ENCODE measurements at regions of chr3 and their contacts with region 1.

Region 1: DNA sequence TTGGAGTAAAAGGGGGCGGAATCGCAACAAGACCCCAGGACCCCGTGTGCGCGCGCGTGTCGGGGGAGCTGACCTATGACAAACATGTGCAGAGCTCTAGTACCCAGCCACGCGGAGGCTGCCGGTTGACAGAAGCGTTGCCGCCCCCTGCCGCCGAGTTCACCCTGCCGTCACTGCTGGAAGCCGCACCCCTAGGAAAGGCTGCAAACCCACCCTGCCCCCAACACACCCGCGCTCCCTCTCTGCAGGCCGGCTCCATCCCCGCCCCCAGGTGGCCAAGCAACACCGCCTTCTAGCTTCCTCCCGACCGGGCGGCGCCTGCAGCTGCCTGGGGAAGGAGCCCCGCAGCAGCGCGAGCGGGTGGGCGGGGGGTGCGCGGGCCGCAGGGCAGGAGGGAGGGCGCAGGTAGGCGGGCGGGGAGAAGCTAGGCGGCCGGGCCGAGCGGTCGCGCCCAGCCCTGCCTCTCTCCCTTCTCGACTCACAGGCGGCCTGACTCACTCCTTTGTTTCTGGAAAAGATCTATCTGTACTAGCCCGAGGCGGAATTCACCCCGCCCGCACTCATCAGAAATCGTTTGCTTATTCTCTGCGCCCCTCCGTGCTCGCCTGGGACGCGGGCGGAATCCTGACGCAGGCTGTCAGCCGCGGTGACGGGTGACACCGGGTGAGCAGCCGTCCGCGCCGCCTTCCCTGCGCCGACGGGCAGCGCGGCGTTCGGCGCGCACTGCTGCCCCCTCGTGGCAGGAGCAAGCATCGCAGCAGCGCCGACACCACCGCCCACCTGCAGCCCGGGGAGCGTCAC is 160.8 kb downstream of the GAP43 start:
- DNase-seq: peak; percentile 82 to 96 (median 90)
- ATAC-seq: peak; percentile 83
- H3K4me3 ChIP-seq: peak overlapping the region; percentile 72
- H3K4me3 Mint-ChIP-seq: peak overlapping the region; percentile 80
- H3K27ac ChIP-seq: peak overlapping the region; percentile 94
- H3K27ac Mint-ChIP-seq: peak overlapping the region; percentile 79
- H3K4me1 ChIP-seq: peaks cover 16% of the 10 kb centered on the region
- H3K4me1 Mint-ChIP-seq: peaks cover 10% of the 10 kb centered on the region
- H3K27me3 ChIP-seq: no peaks in the 10 kb centered on the region
- H3K27me3 Mint-ChIP-seq: no peaks in the 10 kb centered on the region
- CTCF ChIP-seq: peak; percentile 99

Region 2: DNA sequence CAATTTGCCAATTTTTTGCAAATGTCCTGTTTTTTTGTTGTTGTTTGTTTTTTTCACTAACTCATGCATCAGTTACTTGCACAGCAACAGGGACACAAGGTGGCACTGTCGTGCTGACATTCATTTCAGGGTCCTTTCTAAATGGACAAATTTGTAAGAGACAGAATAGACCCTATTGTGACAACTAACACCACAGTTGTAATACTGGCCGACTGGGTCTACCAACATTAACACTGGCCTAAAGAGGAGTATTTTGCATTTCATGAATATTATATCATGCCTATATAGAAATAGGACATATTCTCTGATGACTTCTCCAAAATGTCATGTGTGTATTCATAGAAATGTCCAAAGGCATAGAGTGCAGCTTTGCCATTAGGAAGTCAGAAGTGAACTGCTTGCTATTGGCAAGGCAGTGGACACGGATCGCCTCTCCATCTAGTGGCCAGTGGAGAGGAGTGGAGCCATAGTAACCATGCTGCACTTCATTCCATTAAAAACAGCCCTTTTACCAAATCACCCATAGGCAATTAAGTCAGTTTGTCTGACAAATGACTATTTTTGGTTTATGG is 691.8 kb before region 1 on chr3:
- CTCF ChIA-PET with region 1: interaction called, 9 read pairs
- POLR2A ChIA-PET with region 1: interaction called, 6 read pairs
- intact Hi-C with region 1: loop called in 1 of 2 experiments (anchors 2 kb)
- DNase-seq: peak; percentile 14 to 79 (median 56)
- ATAC-seq: peak; percentile 67
- H3K4me3 ChIP-seq: no peak overlapping the region
- H3K4me3 Mint-ChIP-seq: no peak overlapping the region
- H3K27ac ChIP-seq: no peak overlapping the region
- H3K27ac Mint-ChIP-seq: no peak overlapping the region
- H3K4me1 ChIP-seq: no peaks in the 10 kb centered on the region
- H3K4me1 Mint-ChIP-seq: peaks cover 68% of the 10 kb centered on the region
- H3K27me3 ChIP-seq: no peaks in the 10 kb centered on the region
- H3K27me3 Mint-ChIP-seq: no peaks in the 10 kb centered on the region
- CTCF ChIP-seq: peak; percentile 81

Region 3: DNA sequence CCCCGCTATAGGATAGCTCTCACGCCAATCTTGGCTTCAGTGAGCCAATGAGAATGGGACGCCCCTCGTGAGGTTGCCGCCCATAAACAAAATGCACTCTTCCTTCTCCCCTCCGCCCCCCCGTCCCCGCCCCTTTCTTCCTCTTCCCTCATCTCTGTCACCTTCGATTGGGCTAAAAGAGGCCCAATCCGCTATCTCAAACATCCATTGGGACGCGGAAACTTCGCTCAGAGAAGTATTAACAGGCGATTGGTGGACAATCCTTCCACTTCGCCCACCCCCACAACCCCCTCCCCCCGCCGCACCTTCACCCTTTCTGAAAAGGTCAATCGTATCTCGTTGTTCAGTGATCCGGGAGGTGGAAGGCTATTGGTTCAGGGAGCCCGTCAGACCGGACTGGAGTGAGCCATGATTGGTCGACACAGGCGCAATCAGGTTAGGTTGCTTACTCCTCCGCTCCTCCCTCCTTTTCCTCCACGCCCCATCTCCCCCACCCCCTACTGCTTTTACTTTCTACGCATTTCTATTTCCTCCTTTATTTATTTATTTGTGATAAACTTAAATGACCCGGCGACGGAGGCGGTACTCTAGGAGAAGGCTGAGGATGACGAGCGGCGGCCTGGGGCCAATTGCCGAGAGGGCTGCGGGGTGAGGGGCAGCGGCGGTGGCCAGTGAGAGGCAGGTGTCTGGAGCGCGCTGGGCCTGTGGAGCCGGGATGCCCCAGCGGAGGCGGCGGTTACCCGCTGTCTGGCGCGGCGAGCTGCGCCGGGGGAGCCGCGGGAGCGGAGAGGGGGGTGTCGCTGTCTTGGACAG is 636.6 kb before region 1 on chr3:
- CTCF ChIA-PET with region 1: interaction called, 6 read pairs
- POLR2A ChIA-PET with region 1: interaction called, 18 read pairs
- intact Hi-C with region 1: loop called (anchors 1 to 5 kb)
- DNase-seq: peak; percentile 89 to 99 (median 96)
- ATAC-seq: peak; percentile 72
- H3K4me3 ChIP-seq: peak overlapping the region; percentile 90
- H3K4me3 Mint-ChIP-seq: peak overlapping the region; percentile 94
- H3K27ac ChIP-seq: peak overlapping the region; percentile 91 to 97
- H3K27ac Mint-ChIP-seq: peak overlapping the region; percentile 94
- H3K4me1 ChIP-seq: peaks cover 14% of the 10 kb centered on the region
- H3K4me1 Mint-ChIP-seq: peaks cover 31% of the 10 kb centered on the region
- H3K27me3 ChIP-seq: no peaks in the 10 kb centered on the region
- H3K27me3 Mint-ChIP-seq: no peaks in the 10 kb centered on the region
- CTCF ChIP-seq: no peak

Region 4: GRCh38 chr3:115658337-115659181 is 125.6 kb before region 1 on chr3:
- CTCF ChIA-PET with region 1: interaction called, 6 read pairs
- POLR2A ChIA-PET with region 1: interaction called, 9 read pairs
- intact Hi-C with region 1: loop called (anchors 2 to 5 kb)
- DNase-seq: peak; percentile 51 to 83 (median 64)
- ATAC-seq: peak; percentile 90
- H3K4me3 ChIP-seq: peak overlapping the region; percentile 83
- H3K4me3 Mint-ChIP-seq: peak overlapping the region; percentile 93
- H3K27ac ChIP-seq: peak overlapping the region; percentile 18 to 85
- H3K27ac Mint-ChIP-seq: peak overlapping the region; percentile 96
- H3K4me1 ChIP-seq: peaks cover 17% of the 10 kb centered on the region
- H3K4me1 Mint-ChIP-seq: peaks cover 30% of the 10 kb centered on the region
- H3K27me3 ChIP-seq: no peaks in the 10 kb centered on the region
- H3K27me3 Mint-ChIP-seq: no peaks in the 10 kb centered on the region
- CTCF ChIP-seq: no peak

Region 5: GRCh38 chr3:115671761-115672455 is 112.2 kb before region 1 on chr3:
- CTCF ChIA-PET with region 1: no interaction called
- POLR2A ChIA-PET with region 1: no interaction called
- intact Hi-C with region 1: no loop called
- DNase-seq: no peak
- ATAC-seq: no peak
- H3K4me3 ChIP-seq: no peak overlapping the region
- H3K4me3 Mint-ChIP-seq: no peak overlapping the region
- H3K27ac ChIP-seq: no peak overlapping the region
- H3K27ac Mint-ChIP-seq: no peak overlapping the region
- H3K4me1 ChIP-seq: no peaks in the 10 kb centered on the region
- H3K4me1 Mint-ChIP-seq: no peaks in the 10 kb centered on the region
- H3K27me3 ChIP-seq: peaks cover 0 to 8% of the 10 kb centered on the region in 2 experiments
- H3K27me3 Mint-ChIP-seq: peaks cover 53% of the 10 kb centered on the region
- CTCF ChIP-seq: no peak

Region 6: DNA sequence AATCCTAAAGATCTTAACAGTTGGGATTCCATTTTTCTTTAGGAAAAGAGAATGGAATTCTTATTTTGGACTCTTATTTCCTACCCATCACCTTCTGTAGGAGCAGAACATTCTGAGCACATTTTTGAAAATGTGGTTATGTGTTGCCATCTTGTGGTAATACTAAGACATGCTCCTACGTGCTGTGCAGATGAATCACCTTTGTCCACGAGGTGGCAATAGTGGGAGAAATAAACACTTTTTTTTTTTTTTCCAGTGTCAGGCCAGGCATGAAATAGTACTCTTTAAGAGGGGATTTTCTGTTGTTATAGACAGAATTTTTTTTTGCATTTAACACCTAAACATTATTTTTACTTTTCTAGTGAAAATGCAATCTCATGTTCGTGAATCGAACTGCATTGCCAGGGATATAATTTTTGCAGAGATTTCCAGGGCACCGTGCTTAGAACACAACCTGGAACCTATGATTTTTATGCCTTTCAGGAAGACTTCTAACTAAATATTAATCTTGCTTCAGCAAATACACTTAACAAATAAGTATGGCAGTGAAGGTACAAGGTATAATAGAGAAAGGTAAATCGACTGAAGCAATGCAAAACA is 35.7 kb after region 1 on chr3:
- CTCF ChIA-PET with region 1: interaction called, 16 read pairs
- POLR2A ChIA-PET with region 1: interaction called, 7 read pairs
- intact Hi-C with region 1: loop called (anchors 2 to 5 kb)
- DNase-seq: peak; percentile 18 to 89 (median 40)
- ATAC-seq: peak; percentile 95
- H3K4me3 ChIP-seq: no peak overlapping the region
- H3K4me3 Mint-ChIP-seq: no peak overlapping the region
- H3K27ac ChIP-seq: no peak overlapping the region
- H3K27ac Mint-ChIP-seq: no peak overlapping the region
- H3K4me1 ChIP-seq: no peaks in the 10 kb centered on the region
- H3K4me1 Mint-ChIP-seq: no peaks in the 10 kb centered on the region
- H3K27me3 ChIP-seq: no peaks in the 10 kb centered on the region
- H3K27me3 Mint-ChIP-seq: no peaks in the 10 kb centered on the region
- CTCF ChIP-seq: peak; percentile 100

Region 7: DNA sequence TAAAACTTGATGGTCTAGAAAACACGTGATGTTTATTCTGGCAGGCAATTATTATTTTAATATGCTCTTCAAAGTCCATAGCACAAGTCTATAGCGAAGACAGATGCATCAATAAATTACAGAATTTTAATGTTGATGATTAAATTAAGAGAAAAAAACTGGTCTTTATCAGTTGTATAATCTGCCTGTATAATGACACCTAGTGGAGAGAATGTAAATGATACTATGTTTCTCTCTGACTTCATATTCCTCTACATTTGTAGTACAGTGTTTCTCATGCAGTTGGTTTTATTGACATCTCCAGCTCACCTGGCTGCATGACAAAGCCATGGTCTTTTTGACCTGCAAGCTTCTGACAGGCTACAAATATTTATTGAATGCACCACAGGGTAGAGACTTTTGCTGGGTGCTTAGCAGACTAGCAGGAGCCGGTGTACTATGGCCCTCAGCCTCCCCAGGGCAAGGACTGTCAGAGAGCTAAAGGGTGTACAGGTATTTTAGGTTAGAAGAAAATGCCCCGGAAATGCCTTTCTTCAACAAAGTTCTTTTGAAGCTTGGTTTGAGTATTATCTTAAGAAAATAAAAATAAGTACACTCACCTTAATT is 129.0 kb after region 1 on chr3:
- CTCF ChIA-PET with region 1: no interaction called
- POLR2A ChIA-PET with region 1: no interaction called
- intact Hi-C with region 1: no loop called
- DNase-seq: no peak
- ATAC-seq: no peak
- H3K4me3 ChIP-seq: no peak overlapping the region
- H3K4me3 Mint-ChIP-seq: no peak overlapping the region
- H3K27ac ChIP-seq: no peak overlapping the region
- H3K27ac Mint-ChIP-seq: no peak overlapping the region
- H3K4me1 ChIP-seq: no peaks in the 10 kb centered on the region
- H3K4me1 Mint-ChIP-seq: no peaks in the 10 kb centered on the region
- H3K27me3 ChIP-seq: peaks cover 0 to 3% of the 10 kb centered on the region in 2 experiments
- H3K27me3 Mint-ChIP-seq: peaks cover 22% of the 10 kb centered on the region
- CTCF ChIP-seq: no peak